ENCODE measurements at regions of chr20 and their contacts with region 1.

Region 1: DNA sequence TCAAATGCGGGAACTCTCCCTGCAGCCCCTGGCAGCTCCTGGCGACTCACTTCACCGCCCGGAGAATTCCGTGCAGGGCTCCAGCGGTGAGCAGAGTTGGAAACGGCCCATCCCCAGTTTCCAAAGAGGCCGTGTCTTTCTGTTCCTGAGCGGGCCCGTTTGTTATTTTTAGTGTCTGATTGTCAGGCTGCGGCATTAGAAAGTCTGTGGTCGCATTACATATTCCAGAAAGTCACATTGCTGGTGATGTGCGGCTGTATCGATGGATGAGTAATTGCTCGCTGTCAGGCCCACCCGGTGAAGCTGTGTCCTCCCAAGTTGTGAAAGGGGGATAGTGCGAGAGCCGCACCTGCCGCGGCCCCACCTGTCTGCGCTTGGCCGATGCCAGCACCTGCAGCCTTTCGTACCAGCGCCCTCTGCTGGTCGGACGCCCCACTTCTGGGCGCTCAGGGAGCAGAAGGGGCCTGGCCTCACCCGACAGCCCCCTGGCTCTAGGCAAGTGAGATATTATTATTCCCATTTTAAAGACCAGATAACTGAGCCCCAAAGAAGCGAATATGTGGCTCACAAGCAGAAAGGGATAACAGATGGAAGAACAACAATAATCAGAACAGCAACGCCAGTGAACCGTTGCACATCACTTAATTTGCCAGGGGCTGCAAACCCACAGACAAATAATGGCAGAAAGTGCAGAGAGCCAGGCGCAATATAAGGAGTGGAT is 244.9 kb downstream of the TSHZ2 start:
- DNase-seq: no peak
- ATAC-seq: peak; percentile 97
- H3K4me3 ChIP-seq: no peak overlapping the region
- H3K27ac ChIP-seq: no peak overlapping the region
- H3K4me1 ChIP-seq: no peaks in the 10 kb centered on the region
- H3K27me3 ChIP-seq: no peaks in the 10 kb centered on the region
- CTCF ChIP-seq: peak; percentile 81 to 93 (median 83)
- EP300 ChIP-seq: no peak
- POLR2A ChIP-seq: no peak
- RAD21 ChIP-seq: peak; percentile 84

Region 2: DNA sequence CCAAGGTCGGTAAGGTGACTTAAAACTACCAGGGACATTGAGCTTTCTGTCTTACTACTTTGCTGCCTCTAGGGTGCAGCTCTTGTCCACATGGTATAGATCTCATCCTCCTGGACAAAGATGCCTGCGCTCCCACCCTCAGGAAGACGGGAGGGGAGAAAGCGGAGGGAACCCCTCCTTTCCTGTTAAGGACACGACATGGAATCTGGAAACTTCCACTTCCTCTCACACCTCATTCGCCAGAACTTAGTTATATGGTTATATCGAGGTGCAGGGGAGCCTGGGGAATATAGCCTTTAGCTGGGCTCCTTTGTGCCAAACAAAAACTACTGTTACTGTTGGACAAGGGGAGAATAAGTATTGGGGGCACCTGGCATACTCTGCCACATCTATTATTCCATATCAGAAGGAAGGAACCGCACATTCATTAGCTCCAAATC is 469.2 kb before region 1 on chr20:
- CTCF ChIA-PET with region 1: interaction called, 12 read pairs
- POLR2A ChIA-PET with region 1: no interaction called
- RAD21 ChIA-PET with region 1: interaction called, 12 read pairs
- SMC1A ChIA-PET with region 1: interaction called, 6 read pairs
- in situ Hi-C with region 1: no loop called
- intact Hi-C with region 1: loop called (anchors 2 kb)
- DNase-seq: no peak
- ATAC-seq: peak; percentile 52; the same call in 2 of the 3 replicates
- H3K4me3 ChIP-seq: no peak overlapping the region
- H3K27ac ChIP-seq: no peak overlapping the region
- H3K4me1 ChIP-seq: no peaks in the 10 kb centered on the region
- H3K27me3 ChIP-seq: no peaks in the 10 kb centered on the region
- CTCF ChIP-seq: peak; percentile 21 to 48 (median 45); a peak in 4 of 6 replicates
- EP300 ChIP-seq: no peak
- POLR2A ChIP-seq: no peak
- RAD21 ChIP-seq: 0 out of 2 replicates have a peak, but pooled peaks have one; percentile 33

Region 3: DNA sequence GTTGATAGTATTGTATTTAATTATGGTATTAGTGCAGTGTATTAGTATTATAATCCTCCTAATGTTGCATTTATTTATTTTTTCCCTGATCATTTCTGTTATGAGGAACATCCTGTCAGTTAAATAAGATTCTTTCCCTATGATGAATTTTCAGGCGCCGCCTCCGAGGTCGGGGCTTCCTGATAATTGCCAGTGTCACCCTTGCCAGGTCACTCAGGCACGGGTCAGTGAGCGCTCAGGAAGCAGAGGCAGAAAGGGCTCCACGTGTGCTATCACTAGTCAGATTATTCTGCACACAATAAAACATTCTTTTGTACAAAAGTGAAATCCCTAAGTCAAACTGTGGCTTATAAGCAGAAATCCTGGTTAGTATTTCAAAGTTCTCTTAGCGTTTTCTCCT is 180.0 kb before region 1 on chr20:
- CTCF ChIA-PET with region 1: no interaction called
- POLR2A ChIA-PET with region 1: no interaction called
- RAD21 ChIA-PET with region 1: no interaction called
- SMC1A ChIA-PET with region 1: no interaction called
- in situ Hi-C with region 1: no loop called
- intact Hi-C with region 1: no loop called
- DNase-seq: no peak
- ATAC-seq: no peak
- H3K4me3 ChIP-seq: no peak overlapping the region
- H3K27ac ChIP-seq: no peak overlapping the region
- H3K4me1 ChIP-seq: no peaks in the 10 kb centered on the region
- H3K27me3 ChIP-seq: no peaks in the 10 kb centered on the region
- CTCF ChIP-seq: no peak
- EP300 ChIP-seq: no peak
- POLR2A ChIP-seq: no peak
- RAD21 ChIP-seq: no peak

Region 4: DNA sequence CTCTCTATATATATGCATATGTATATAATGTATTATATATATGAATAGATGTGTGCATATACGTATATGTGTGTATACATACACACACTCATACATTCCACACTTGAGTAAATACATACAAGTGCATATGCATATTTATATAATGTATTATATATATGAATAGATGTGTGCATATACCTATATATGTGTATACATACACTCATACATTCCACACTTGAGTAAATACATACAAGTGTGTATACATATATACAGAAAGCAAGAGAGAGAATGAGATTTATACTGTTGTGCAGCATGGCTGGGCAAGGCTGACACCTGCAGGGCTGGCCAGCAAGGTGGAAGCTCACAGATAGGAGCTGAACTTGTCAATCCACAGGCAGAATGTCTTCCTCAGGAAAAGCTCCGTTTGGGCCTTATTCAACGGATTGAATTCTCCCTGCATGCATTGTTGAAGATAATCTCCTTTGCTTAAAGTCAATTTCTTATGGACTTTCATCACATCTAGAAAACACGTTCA is 119.8 kb after region 1 on chr20:
- CTCF ChIA-PET with region 1: no interaction called
- POLR2A ChIA-PET with region 1: no interaction called
- RAD21 ChIA-PET with region 1: no interaction called
- SMC1A ChIA-PET with region 1: no interaction called
- in situ Hi-C with region 1: no loop called
- intact Hi-C with region 1: no loop called
- DNase-seq: no peak
- ATAC-seq: no peak
- H3K4me3 ChIP-seq: no peak overlapping the region
- H3K27ac ChIP-seq: no peak overlapping the region
- H3K4me1 ChIP-seq: no peaks in the 10 kb centered on the region
- H3K27me3 ChIP-seq: no peaks in the 10 kb centered on the region
- CTCF ChIP-seq: peak in 1 of 3 experiments; percentile 14; a peak in 2 of 6 replicates
- EP300 ChIP-seq: no peak
- POLR2A ChIP-seq: no peak
- RAD21 ChIP-seq: no peak

Measured in GM12878 (cell line).